Activated CD4-positive, alpha-beta memory T cell treated with anti-CD3 and anti-CD28 coated beads for 36 hours (primary cell): ENCODE measurements at regions of chr20 and their contacts with region 1.

Region 1: GRCh38 chr20:45946149-45946970 is 11.9 kb downstream of the PCIF1 start:
- DNase-seq: peak; percentile 74
- H3K4me3 Mint-ChIP-seq: no peak overlapping the region
- H3K27ac Mint-ChIP-seq: peak overlapping the region; percentile 79
- H3K4me1 Mint-ChIP-seq: peaks cover 28% of the 10 kb centered on the region
- H3K27me3 Mint-ChIP-seq: no peaks in the 10 kb centered on the region

Region 2: GRCh38 chr20:45798935-45799642 is 147.3 kb before region 1 on chr20:
- CTCF ChIA-PET with region 1: interaction called, 13 read pairs
- POLR2A ChIA-PET with region 1: no interaction called
- intact Hi-C with region 1: no loop called
- DNase-seq: peak; percentile 74
- H3K4me3 Mint-ChIP-seq: no peak overlapping the region
- H3K27ac Mint-ChIP-seq: peak overlapping the region; percentile 4
- H3K4me1 Mint-ChIP-seq: peaks cover 16% of the 10 kb centered on the region
- H3K27me3 Mint-ChIP-seq: no peaks in the 10 kb centered on the region

Region 3: DNA sequence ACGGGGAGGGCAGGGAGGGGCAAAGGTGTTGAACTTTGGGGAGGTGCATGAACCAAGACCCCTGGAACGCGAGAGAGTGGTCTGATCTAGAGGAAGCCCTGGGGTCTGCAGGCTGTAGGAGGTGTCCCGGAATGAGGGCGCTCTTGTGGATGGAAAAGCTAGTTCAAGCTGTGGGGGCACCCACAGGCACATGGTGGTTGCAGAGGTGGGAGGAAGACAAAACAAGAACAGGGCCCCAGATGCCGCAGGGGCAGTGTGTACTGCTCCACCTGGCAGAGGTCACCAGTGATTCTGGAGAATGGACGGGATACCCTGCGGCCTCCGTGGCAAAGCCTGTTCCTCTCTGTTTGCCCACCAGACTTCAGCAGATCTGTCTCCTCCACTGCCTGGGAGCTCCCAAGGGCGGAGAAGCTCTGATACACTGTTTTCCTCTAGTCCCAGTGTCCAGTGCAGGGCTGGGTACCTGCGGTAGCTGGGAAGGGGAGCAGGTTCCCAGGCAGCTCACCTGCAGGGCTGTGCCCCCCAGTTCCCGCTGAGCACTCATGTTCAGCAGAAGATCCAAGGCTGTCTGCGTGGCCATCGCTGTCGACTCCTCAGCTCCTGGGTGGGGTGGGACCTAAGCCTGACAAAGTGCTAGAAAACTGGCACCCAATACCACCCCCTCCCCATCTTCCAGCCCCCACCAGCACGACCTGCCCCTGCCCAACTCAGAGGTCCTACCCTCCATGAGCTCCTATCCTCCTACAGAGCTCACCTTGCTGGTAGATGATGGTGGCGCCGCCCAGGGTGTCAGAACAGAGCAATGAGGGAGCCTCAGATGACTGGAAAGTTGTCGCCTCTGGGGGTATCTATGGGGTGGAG is 11.0 kb after region 1 on chr20:
- CTCF ChIA-PET with region 1: no interaction called
- POLR2A ChIA-PET with region 1: interaction called, 10 read pairs
- intact Hi-C with region 1: no loop called
- DNase-seq: no peak
- H3K4me3 Mint-ChIP-seq: no peak overlapping the region
- H3K27ac Mint-ChIP-seq: no peak overlapping the region
- H3K4me1 Mint-ChIP-seq: no peaks in the 10 kb centered on the region
- H3K27me3 Mint-ChIP-seq: no peaks in the 10 kb centered on the region

Region 4: DNA sequence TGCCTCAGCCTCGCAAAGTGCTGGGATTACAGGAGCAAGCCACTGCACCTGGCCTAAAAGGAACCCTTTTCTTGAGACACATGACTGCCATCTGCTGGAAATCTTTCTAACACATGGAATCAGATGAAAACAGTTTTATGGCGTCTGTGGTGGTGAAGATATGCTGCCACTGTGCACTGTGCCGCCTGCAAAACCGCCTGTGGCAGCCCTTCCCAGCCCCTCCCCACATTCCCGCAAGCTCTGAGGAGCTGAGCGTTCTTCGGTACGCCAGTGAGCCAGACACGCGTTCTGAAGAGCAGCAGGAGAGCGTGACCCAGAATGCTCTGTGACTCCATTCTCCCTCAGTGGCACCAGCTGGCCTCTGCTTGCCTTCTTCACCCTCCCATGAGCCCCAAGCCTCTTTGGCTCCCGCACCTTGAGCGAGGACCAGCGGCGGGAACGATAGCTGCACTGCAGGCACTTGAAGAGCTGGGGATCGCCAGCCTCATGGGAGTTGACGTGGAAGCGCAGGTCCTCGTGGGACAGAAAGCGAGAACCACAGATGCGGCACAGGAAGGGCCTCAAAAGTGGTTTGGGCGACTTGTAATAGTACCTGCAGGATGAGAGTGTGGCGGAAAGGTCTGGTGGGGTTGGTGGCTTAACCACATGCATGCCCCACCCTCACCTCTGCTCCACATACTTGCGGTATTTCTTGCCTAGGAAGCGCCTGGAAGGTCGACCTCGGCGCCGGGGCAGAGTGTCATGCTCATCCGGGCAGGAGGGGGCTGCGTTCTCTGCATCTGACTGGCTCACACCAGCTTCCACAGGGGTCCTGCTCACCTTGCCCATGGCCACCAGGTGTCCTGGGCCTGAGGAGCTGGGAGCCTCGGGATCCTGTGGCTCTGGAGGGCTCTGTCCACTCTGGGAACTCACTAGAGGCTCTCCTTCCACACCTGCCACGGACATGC is 17.0 kb after region 1 on chr20:
- CTCF ChIA-PET with region 1: interaction called, 67 read pairs
- POLR2A ChIA-PET with region 1: interaction called, 14 read pairs
- intact Hi-C with region 1: loop called (anchors 2 kb)
- DNase-seq: no peak
- H3K4me3 Mint-ChIP-seq: no peak overlapping the region
- H3K27ac Mint-ChIP-seq: no peak overlapping the region
- H3K4me1 Mint-ChIP-seq: peaks cover 8% of the 10 kb centered on the region
- H3K27me3 Mint-ChIP-seq: no peaks in the 10 kb centered on the region

Region 5: DNA sequence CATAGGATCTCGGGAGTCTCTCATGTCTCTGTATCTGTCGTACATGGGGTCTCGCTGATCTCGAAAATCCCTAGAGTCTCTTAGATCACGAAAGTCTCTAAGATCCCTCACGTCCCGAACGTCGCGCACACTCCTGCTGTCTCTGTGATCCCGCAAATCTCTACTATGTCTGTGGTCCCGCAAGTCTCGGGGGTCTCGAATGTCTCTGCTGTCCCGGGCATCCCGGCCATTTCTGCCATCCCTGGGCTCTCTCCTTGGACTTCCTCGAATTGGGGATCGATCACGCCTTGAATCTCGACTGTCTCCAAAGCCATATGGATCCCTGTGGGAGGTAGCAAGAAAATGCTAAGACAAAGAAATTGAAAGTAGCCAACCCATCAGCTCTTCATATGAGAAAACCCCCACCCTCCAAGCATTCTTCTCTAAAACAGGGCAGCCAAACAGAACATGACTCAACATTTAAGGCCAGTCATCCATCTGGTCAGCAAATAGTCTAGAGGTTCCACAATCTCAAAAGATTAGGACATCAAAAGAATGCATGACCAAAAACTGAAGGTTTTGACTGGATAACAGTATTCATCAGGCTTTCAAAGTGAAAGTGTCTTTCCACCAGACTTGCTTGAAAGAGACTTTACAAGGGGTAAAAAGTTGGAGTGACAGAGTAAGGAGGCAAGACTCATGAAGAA is 124.0 kb after region 1 on chr20:
- CTCF ChIA-PET with region 1: no interaction called
- POLR2A ChIA-PET with region 1: no interaction called
- intact Hi-C with region 1: no loop called
- DNase-seq: no peak
- H3K4me3 Mint-ChIP-seq: no peak overlapping the region
- H3K27ac Mint-ChIP-seq: no peak overlapping the region
- H3K4me1 Mint-ChIP-seq: no peaks in the 10 kb centered on the region
- H3K27me3 Mint-ChIP-seq: no peaks in the 10 kb centered on the region

Region 6: DNA sequence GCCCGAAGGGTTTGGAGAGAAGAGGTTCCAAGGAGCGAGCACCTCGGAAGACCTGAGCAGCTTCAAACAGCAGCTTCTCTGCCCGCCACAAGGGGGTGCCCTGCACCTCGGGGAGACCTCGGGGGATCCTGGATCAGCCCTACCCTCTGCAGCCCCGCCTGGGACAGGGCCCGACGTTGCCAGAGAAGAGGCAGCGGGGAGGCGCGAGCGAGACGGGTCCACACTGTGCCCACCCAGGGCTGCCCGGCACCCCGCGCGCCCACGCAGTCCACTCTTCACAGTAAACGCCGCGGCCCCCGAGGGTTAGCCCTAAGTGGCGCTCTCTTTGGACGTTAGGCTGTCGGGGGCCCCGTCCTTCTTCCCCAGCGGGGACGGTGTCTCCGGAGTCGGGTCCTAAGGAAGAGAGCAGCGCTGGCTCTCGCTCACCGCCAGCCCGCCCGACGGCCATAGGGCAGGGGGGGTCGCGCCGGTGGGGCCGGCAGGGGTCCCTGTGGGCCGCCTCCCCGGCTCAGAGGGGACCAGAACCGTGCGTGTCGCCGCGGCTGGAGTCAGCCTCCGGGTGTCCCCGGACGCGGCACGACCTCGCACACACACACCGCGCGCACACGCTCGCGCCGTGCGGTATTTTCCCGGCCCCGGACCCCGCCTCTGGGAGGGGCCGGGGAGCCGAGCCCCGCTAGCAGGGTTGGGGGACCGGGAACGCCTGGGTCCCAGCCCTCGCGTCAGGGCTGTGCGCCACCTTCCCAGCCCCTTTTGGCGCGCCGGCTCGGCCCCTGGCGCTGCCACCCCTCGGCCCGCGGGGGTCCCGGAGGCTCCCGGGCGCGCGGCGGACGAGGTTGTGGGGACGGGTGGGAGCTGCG is 361.0 kb after region 1 on chr20:
- CTCF ChIA-PET with region 1: no interaction called
- POLR2A ChIA-PET with region 1: no interaction called
- intact Hi-C with region 1: no loop called
- DNase-seq: peak; percentile 78
- H3K4me3 Mint-ChIP-seq: no peak overlapping the region
- H3K27ac Mint-ChIP-seq: no peak overlapping the region
- H3K4me1 Mint-ChIP-seq: peaks cover 6% of the 10 kb centered on the region
- H3K27me3 Mint-ChIP-seq: peaks cover 50% of the 10 kb centered on the region